ENCODE measurements at regions of chr9 and their contacts with region 1.

Region 1: GRCh38 chr9:71783120-71783530 is 14.8 kb upstream of the CEMIP2 start:
- DNase-seq: peak; percentile 60 to 93 (median 90)
- ATAC-seq: peak; percentile 98
- H3K4me3 ChIP-seq: peak overlapping the region; percentile 18
- H3K4me3 Mint-ChIP-seq: peak overlapping the region; percentile 62 to 82 (median 76)
- H3K27ac ChIP-seq: peak overlapping the region; percentile 85
- H3K27ac Mint-ChIP-seq: peak overlapping the region; percentile 94 to 100 (median 99)
- H3K4me1 ChIP-seq: peaks cover 38% of the 10 kb centered on the region in 2 donors
- H3K4me1 Mint-ChIP-seq: peaks cover 20 to 58% (median 53%) of the 10 kb centered on the region in 7 donors
- H3K27me3 ChIP-seq: no peaks in the 10 kb centered on the region
- H3K27me3 Mint-ChIP-seq: no peaks in the 10 kb centered on the region

Region 2: GRCh38 chr9:71604197-71605063 is 178.7 kb before region 1 on chr9:
- CTCF ChIA-PET with region 1: interaction called, 4 read pairs
- POLR2A ChIA-PET with region 1: no interaction called
- intact Hi-C with region 1: loop called in 1 of 2 experiments (anchors 5 kb)
- DNase-seq: peak; percentile 52 to 80 (median 75)
- ATAC-seq: peak; percentile 89
- H3K4me3 ChIP-seq: no peak overlapping the region
- H3K4me3 Mint-ChIP-seq: no peak overlapping the region
- H3K27ac ChIP-seq: no peak overlapping the region
- H3K27ac Mint-ChIP-seq: no peak overlapping the region
- H3K4me1 ChIP-seq: no peaks in the 10 kb centered on the region
- H3K4me1 Mint-ChIP-seq: peaks cover 0 to 4% (median 0%) of the 10 kb centered on the region in 7 donors
- H3K27me3 ChIP-seq: peaks cover 0 to 3% of the 10 kb centered on the region in 2 donors
- H3K27me3 Mint-ChIP-seq: peaks cover 0 to 29% (median 0%) of the 10 kb centered on the region in 5 donors

Region 3: GRCh38 chr9:71806901-71807307 is 23.8 kb after region 1 on chr9:
- CTCF ChIA-PET with region 1: interaction called, 37 read pairs
- POLR2A ChIA-PET with region 1: interaction called, 29 read pairs
- intact Hi-C with region 1: loop called (anchors 1 kb)
- DNase-seq: peak in 8 of 9 donors; percentile 20 to 65 (median 50)
- ATAC-seq: peak; percentile 98
- H3K4me3 ChIP-seq: no peak overlapping the region
- H3K4me3 Mint-ChIP-seq: no peak overlapping the region
- H3K27ac ChIP-seq: no peak overlapping the region
- H3K27ac Mint-ChIP-seq: peak overlapping the region in 7 of 9 donors; percentile 19 to 85 (median 65)
- H3K4me1 ChIP-seq: peaks cover 0 to 7% of the 10 kb centered on the region in 2 donors
- H3K4me1 Mint-ChIP-seq: peaks cover 0 to 21% (median 10%) of the 10 kb centered on the region in 7 donors
- H3K27me3 ChIP-seq: no peaks in the 10 kb centered on the region
- H3K27me3 Mint-ChIP-seq: peaks cover 0 to 3% (median 0%) of the 10 kb centered on the region in 5 donors

Region 4: DNA sequence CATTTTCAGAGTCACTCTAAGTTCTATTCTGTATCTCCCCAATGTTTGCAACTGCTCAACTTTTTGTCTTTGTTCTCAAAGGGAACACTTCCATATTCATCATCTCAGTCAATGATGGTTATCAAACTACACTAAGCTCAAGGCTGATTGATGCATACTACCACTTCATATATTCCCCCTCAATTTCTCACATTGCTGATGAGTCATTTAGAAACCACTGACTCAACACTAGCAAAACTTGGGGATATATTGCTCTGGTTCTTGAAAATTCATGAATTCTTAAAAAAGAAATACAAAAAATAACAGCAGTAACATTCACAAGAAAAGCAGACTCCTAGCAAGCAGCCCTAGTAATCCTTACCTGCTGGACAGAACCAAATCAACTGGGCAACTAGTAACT is 75.7 kb after region 1 on chr9:
- CTCF ChIA-PET with region 1: no interaction called
- POLR2A ChIA-PET with region 1: no interaction called
- intact Hi-C with region 1: loop called in 1 of 2 experiments (anchors 5 kb)
- DNase-seq: no peak
- ATAC-seq: no peak
- H3K4me3 ChIP-seq: no peak overlapping the region
- H3K4me3 Mint-ChIP-seq: peak overlapping the region in 1 of 10 donors; percentile 2
- H3K27ac ChIP-seq: no peak overlapping the region
- H3K27ac Mint-ChIP-seq: peak overlapping the region in 1 of 9 donors; percentile 3
- H3K4me1 ChIP-seq: no peaks in the 10 kb centered on the region
- H3K4me1 Mint-ChIP-seq: peaks cover 0 to 15% (median 0%) of the 10 kb centered on the region in 7 donors
- H3K27me3 ChIP-seq: no peaks in the 10 kb centered on the region
- H3K27me3 Mint-ChIP-seq: no peaks in the 10 kb centered on the region

Region 5: GRCh38 chr9:71911253-71912074 is 128.3 kb after region 1 on chr9 and contains the start of gene C9orf85:
- CTCF ChIA-PET with region 1: interaction called, 6 read pairs
- POLR2A ChIA-PET with region 1: interaction called, 12 read pairs
- intact Hi-C with region 1: loop called (anchors 1 kb)
- DNase-seq: peak; percentile 84 to 98 (median 95)
- ATAC-seq: peak; percentile 96
- H3K4me3 ChIP-seq: peak within 1 kb of the TSS; percentile 83
- H3K4me3 Mint-ChIP-seq: peak within 1 kb of the TSS; percentile 95 to 100 (median 100)
- H3K27ac ChIP-seq: peak within 1 kb of the TSS; percentile 74
- H3K27ac Mint-ChIP-seq: peak within 1 kb of the TSS; percentile 90 to 99 (median 95)
- H3K4me1 ChIP-seq: peaks cover 15 to 22% of the 10 kb centered on the region in 2 donors
- H3K4me1 Mint-ChIP-seq: peaks cover 47 to 80% (median 67%) of the 10 kb centered on the region in 7 donors
- H3K27me3 ChIP-seq: peaks cover 0 to 3% of the 10 kb centered on the region in 2 donors
- H3K27me3 Mint-ChIP-seq: no peaks in the 10 kb centered on the region
- total RNA-seq, gene C9orf85: 4.8 to 10.3 (median 8.6) TPM

Region 6: GRCh38 chr9:73132034-73132776 is 1349.1 kb after region 1 on chr9:
- CTCF ChIA-PET with region 1: no interaction called
- POLR2A ChIA-PET with region 1: no interaction called
- intact Hi-C with region 1: loop called in 1 of 2 experiments (anchors 5 kb)
- DNase-seq: peak; percentile 51 to 91 (median 85)
- ATAC-seq: peak; percentile 97
- H3K4me3 ChIP-seq: peak overlapping the region; percentile 78
- H3K4me3 Mint-ChIP-seq: peak overlapping the region; percentile 74 to 97 (median 90)
- H3K27ac ChIP-seq: peak overlapping the region; percentile 90
- H3K27ac Mint-ChIP-seq: peak overlapping the region; percentile 93 to 99 (median 95)
- H3K4me1 ChIP-seq: peaks cover 9% of the 10 kb centered on the region in 2 donors
- H3K4me1 Mint-ChIP-seq: peaks cover 20 to 47% (median 37%) of the 10 kb centered on the region in 7 donors
- H3K27me3 ChIP-seq: no peaks in the 10 kb centered on the region
- H3K27me3 Mint-ChIP-seq: no peaks in the 10 kb centered on the region

Measured in naive thymus-derived CD4-positive, alpha-beta T cell (primary cell).